ENCODE measurements at regions of chr14 and their contacts with region 1.

Region 1: DNA sequence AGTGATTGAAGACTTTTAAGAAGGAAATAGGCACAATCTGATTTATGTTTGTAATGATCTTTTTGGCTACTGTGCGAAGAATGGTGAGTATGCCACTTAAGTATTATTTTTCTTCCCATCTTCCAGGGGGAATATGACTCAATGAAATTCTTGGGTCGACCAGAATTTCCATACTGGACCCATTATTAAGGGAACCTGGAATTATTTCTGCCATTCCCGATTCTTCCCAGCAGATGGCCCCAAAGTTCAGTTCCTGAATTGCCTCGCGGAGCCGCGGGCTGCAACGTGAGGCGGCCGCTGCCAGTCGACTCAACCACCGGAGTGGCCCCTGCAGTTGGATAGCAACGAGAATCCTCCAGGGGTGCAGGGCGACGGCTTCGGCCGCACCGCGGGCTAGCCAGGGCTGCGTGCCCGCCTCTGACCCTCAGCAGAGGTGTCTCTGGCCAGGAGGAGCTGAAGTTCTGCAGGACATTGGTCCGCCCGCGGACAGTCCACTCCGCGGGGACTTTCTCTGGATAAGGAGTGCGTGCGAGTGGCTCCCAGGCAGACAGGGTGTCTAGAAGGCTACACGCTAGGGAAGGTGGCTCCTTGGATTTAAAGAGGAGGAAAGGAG is 628 bp upstream of the TSHR start:
- DNase-seq: peak; percentile 77 to 90 (median 88)
- ATAC-seq: peak; percentile 93 to 96
- H3K4me3 ChIP-seq: peak overlapping the region; percentile 73
- H3K27ac ChIP-seq: no peak overlapping the region
- H3K4me1 ChIP-seq: peaks cover 3% of the 10 kb centered on the region
- H3K27me3 ChIP-seq: no peaks in the 10 kb centered on the region

Region 2: GRCh38 chr14:80987235-80988032 is 32.6 kb after region 1 on chr14:
- intact Hi-C with region 1: loop called in 2 of 4 experiments (anchors 5 kb)
- DNase-seq: peak in 2 of 3 donors; percentile 40 to 56
- ATAC-seq: peak in 1 of 2 donors; percentile 69
- H3K4me3 ChIP-seq: no peak overlapping the region
- H3K27ac ChIP-seq: no peak overlapping the region
- H3K4me1 ChIP-seq: no peaks in the 10 kb centered on the region
- H3K27me3 ChIP-seq: no peaks in the 10 kb centered on the region

Region 3: GRCh38 chr14:82009076-82009475 is 1054.3 kb after region 1 on chr14:
- intact Hi-C with region 1: no loop called
- DNase-seq: no peak
- ATAC-seq: no peak
- H3K4me3 ChIP-seq: no peak overlapping the region
- H3K27ac ChIP-seq: no peak overlapping the region
- H3K4me1 ChIP-seq: no peaks in the 10 kb centered on the region
- H3K27me3 ChIP-seq: no peaks in the 10 kb centered on the region